ENCODE measurements at regions of chr15 and their contacts with region 1.

Region 1: GRCh38 chr15:67521029-67521811 is at the start of gene C15orf61:
- DNase-seq: peak; percentile 92
- H3K4me3 ChIP-seq: peak within 1 kb of the TSS; percentile 65 to 86 (median 84)
- H3K27ac ChIP-seq: peak within 1 kb of the TSS; percentile 92 to 98 (median 96)
- H3K4me1 ChIP-seq: peaks cover 0 to 27% (median 22%) of the 10 kb centered on the region in 4 donors
- H3K27me3 ChIP-seq: no peaks in the 10 kb centered on the region
- CTCF ChIP-seq: no peak
- EP300 ChIP-seq: no peak
- POLR2A ChIP-seq: peak; percentile 28 to 42
- total RNA-seq, gene C15orf61: 2.8 to 8.6 (median 5.7) TPM

Region 2: GRCh38 chr15:67839929-67840748 is 318.9 kb after region 1 on chr15 and contains the start of gene RNU6-1:
- intact Hi-C with region 1: loop called (anchors 5 kb)
- DNase-seq: peak; percentile 97
- H3K4me3 ChIP-seq: peak within 1 kb of the TSS; percentile 89 to 95 (median 91)
- H3K27ac ChIP-seq: peak within 1 kb of the TSS; percentile 97 to 100 (median 99)
- H3K4me1 ChIP-seq: peaks cover 0 to 62% (median 51%) of the 10 kb centered on the region in 4 donors
- H3K27me3 ChIP-seq: peaks cover 8 to 11% (median 9%) of the 10 kb centered on the region in 3 donors
- CTCF ChIP-seq: no peak
- EP300 ChIP-seq: peak in 1 of 4 donors; percentile 52
- POLR2A ChIP-seq: peak; percentile 92 to 96
- total RNA-seq, gene RNU6-1: not detected

Region 3: DNA sequence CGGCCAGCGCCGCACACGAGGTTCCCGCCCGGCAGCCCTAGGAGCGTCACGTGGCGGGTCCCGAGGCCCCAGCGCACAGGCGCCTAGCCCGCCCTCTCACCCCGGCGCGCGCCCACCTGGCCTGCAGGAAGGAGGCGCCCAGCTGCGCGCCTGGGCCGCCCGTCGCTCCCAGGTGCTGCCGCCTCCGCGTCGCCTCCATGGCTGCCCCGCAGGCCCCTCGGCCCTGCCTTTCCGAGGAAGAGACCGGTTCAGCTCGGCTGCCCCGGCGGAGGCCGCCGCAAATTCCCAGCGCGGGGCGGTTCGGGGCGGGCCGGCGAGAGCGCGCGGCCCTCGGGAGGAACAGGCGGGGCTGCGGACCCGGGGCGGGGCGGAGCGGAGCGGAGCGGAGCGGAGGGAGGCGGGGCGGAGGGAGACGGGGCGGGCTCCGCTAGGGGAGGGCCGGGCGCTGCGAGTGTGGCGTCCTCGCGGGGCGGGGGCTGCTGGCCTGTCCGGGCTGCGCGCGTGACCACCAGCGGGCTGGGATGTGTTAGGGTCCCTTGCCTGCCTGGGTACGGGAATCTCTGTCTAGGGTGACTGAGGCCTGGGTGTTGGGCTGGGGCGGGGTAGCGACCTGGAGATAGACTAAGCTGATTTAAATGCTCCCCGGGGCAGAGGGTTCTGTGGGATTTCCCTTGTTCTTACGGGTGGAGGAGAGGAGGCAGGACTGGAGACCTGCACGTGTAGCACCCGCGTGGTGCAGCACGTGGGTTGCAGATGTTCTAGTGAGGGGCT is 708.4 kb after region 1 on chr15 and contains the start of gene CLN6:
- intact Hi-C with region 1: loop called (anchors 5 kb)
- DNase-seq: peak; percentile 90
- H3K4me3 ChIP-seq: peak within 1 kb of the TSS; percentile 66 to 94 (median 69)
- H3K27ac ChIP-seq: peak within 1 kb of the TSS; percentile 79 to 89 (median 84)
- H3K4me1 ChIP-seq: peaks cover 0 to 25% (median 23%) of the 10 kb centered on the region in 4 donors
- H3K27me3 ChIP-seq: no peaks in the 10 kb centered on the region
- CTCF ChIP-seq: no peak
- EP300 ChIP-seq: no peak
- POLR2A ChIP-seq: no peak
- total RNA-seq, gene CLN6: 9.3 to 17.4 (median 12.7) TPM

Measured in sigmoid colon (tissue), 7 donors.